ENCODE measurements at regions of chr10 and their contacts with region 1.

Region 1: GRCh38 chr10:116287906-116288501 is 15.0 kb upstream of the GFRA1 start:
- DNase-seq: peak; percentile 55
- ATAC-seq: no peak
- H3K4me3 Mint-ChIP-seq: no peak overlapping the region
- H3K27ac Mint-ChIP-seq: no peak overlapping the region
- H3K4me1 Mint-ChIP-seq: no peaks in the 10 kb centered on the region
- H3K27me3 Mint-ChIP-seq: peaks cover 8% of the 10 kb centered on the region

Region 2: GRCh38 chr10:115171392-115171960 is 1116.5 kb before region 1 on chr10:
- CTCF ChIA-PET with region 1: no interaction called
- POLR2A ChIA-PET with region 1: no interaction called
- intact Hi-C with region 1: loop called in 1 of 2 experiments (anchors 2 kb)
- DNase-seq: no peak
- ATAC-seq: no peak
- H3K4me3 Mint-ChIP-seq: no peak overlapping the region
- H3K27ac Mint-ChIP-seq: no peak overlapping the region
- H3K4me1 Mint-ChIP-seq: no peaks in the 10 kb centered on the region
- H3K27me3 Mint-ChIP-seq: no peaks in the 10 kb centered on the region

Region 3: GRCh38 chr10:115355162-115355760 is 932.7 kb before region 1 on chr10:
- CTCF ChIA-PET with region 1: interaction called, 5 read pairs
- POLR2A ChIA-PET with region 1: no interaction called
- intact Hi-C with region 1: loop called in 1 of 2 experiments (anchors 1 kb)
- DNase-seq: peak; percentile 48
- ATAC-seq: peak; percentile 58
- H3K4me3 Mint-ChIP-seq: no peak overlapping the region
- H3K27ac Mint-ChIP-seq: no peak overlapping the region
- H3K4me1 Mint-ChIP-seq: no peaks in the 10 kb centered on the region
- H3K27me3 Mint-ChIP-seq: no peaks in the 10 kb centered on the region

Region 4: DNA sequence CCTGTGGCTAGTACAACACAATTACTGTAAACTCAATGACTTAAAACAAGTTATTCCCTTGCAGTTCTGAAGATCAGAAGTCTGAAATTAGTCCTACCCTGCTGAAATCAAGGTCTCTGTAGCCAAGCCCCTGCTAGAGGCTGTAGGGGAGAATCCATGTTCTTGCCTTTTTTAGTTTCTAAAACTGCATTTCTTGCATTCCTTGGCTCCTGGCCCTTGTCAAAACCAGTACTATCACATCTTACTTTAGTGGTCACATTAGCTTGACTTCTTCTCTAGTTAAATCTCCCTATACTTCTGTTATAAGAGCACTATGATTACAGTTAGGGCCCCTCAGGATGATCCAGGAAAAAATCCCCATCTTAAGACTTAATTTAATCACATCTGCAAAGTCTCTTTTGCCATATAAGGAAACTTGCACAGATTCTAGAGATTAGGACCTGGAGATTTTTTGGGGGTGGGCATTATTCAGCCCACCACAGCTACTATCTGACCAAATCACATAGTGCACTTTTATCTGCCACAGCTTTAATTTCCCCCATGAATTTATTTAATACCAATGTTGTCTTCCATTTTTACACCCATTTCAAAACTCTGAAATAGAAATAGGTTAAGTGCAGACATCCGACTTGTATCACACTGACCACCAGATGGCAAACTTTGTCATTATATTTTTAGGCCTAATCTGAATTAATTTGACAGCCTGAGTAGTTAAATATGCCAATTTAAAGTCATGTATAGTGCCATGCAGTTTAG is 581.8 kb before region 1 on chr10:
- CTCF ChIA-PET with region 1: interaction called, 11 read pairs
- POLR2A ChIA-PET with region 1: no interaction called
- intact Hi-C with region 1: loop called (anchors 1 to 5 kb)
- DNase-seq: no peak
- ATAC-seq: no peak
- H3K4me3 Mint-ChIP-seq: no peak overlapping the region
- H3K27ac Mint-ChIP-seq: no peak overlapping the region
- H3K4me1 Mint-ChIP-seq: no peaks in the 10 kb centered on the region
- H3K27me3 Mint-ChIP-seq: no peaks in the 10 kb centered on the region

Region 5: GRCh38 chr10:115795964-115796363 is 492.0 kb before region 1 on chr10:
- CTCF ChIA-PET with region 1: interaction called, 4 read pairs
- POLR2A ChIA-PET with region 1: no interaction called
- intact Hi-C with region 1: loop called in 1 of 2 experiments (anchors 5 kb)
- DNase-seq: no peak
- ATAC-seq: no peak
- H3K4me3 Mint-ChIP-seq: no peak overlapping the region
- H3K27ac Mint-ChIP-seq: no peak overlapping the region
- H3K4me1 Mint-ChIP-seq: no peaks in the 10 kb centered on the region
- H3K27me3 Mint-ChIP-seq: no peaks in the 10 kb centered on the region